ENCODE measurements at regions of chr12 and their contacts with region 1.

Region 1: DNA sequence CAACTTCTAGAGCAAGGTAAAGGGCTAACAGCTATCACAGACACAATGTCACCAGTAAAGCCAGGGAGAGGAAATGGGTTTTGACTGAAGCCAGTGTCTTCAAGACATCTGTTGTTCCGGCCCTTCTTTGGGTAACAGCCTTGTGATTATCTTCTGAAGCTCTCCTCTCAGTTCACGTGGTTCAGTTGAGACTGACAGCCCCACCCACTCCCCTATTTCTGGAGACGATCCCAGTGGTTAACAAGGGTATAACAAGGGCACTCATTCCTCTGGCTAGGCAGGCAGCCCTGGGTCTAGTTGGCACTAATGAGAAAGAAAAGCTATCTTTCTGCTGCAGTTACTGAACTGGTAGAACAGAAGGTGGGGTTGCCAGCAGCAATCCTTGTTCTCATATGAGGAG is 6.9 kb downstream of the GNPTAB start:
- DNase-seq: peak; percentile 93
- H3K4me3 ChIP-seq: peak overlapping the region; percentile 31
- H3K27ac ChIP-seq: peak overlapping the region; percentile 60
- H3K4me1 ChIP-seq: peaks cover 67% of the 10 kb centered on the region
- CTCF ChIP-seq: peak; percentile 66

Region 2: GRCh38 chr12:100290016-100290415 is 1533.9 kb before region 1 on chr12:
- CTCF ChIA-PET with region 1: no interaction called
- POLR2A ChIA-PET with region 1: no interaction called
- intact Hi-C with region 1: no loop called
- DNase-seq: no peak
- H3K4me3 ChIP-seq: no peak overlapping the region
- H3K27ac ChIP-seq: no peak overlapping the region
- H3K4me1 ChIP-seq: no peaks in the 10 kb centered on the region
- CTCF ChIP-seq: no peak

Region 3: GRCh38 chr12:101782273-101782731 is 41.6 kb before region 1 on chr12:
- CTCF ChIA-PET with region 1: interaction called, 6 read pairs
- POLR2A ChIA-PET with region 1: interaction called, 24 read pairs
- intact Hi-C with region 1: no loop called
- DNase-seq: no peak
- H3K4me3 ChIP-seq: no peak overlapping the region
- H3K27ac ChIP-seq: no peak overlapping the region
- H3K4me1 ChIP-seq: peaks cover 16% of the 10 kb centered on the region
- CTCF ChIP-seq: no peak

Region 4: GRCh38 chr12:101806265-101806664 is 17.6 kb before region 1 on chr12:
- CTCF ChIA-PET with region 1: no interaction called
- POLR2A ChIA-PET with region 1: interaction called, 13 read pairs
- intact Hi-C with region 1: no loop called
- DNase-seq: no peak
- H3K4me3 ChIP-seq: no peak overlapping the region
- H3K27ac ChIP-seq: no peak overlapping the region
- H3K4me1 ChIP-seq: no peaks in the 10 kb centered on the region
- CTCF ChIP-seq: no peak